GM13977 (cell line): ENCODE measurements at regions of chr2 and their contacts with region 1.

Region 1: GRCh38 chr2:222319586-222320435 is 21.0 kb upstream of the PAX3 start:
- DNase-seq: peak; percentile 81
- CTCF ChIP-seq: peak; percentile 36

Region 2: GRCh38 chr2:222410534-222410933 is 90.7 kb after region 1 on chr2:
- in situ Hi-C with region 1: no loop called
- DNase-seq: no peak
- CTCF ChIP-seq: no peak

Region 3: GRCh38 chr2:222554517-222554916 is 234.7 kb after region 1 on chr2:
- in situ Hi-C with region 1: loop called (anchors 10 kb)
- DNase-seq: no peak
- CTCF ChIP-seq: no peak